K562 (cell line): ENCODE measurements at regions of chr11 and their contacts with region 1.

Region 1: GRCh38 chr11:119381181-119381988 is at the start of gene USP2:
- DNase-seq: peak; percentile 95 to 97 (median 96)
- ATAC-seq: peak; percentile 88
- H3K4me3 ChIP-seq: peak within 1 kb of the TSS; percentile 61
- H3K27ac ChIP-seq: peak within 1 kb of the TSS; percentile 67
- H3K4me1 ChIP-seq: peaks cover 43 to 47% of the 10 kb centered on the region in 2 experiments
- H3K27me3 ChIP-seq: no peaks in the 10 kb centered on the region
- CTCF ChIP-seq: peak; percentile 93 to 96 (median 94)
- EP300 ChIP-seq: peak; percentile 24; the same call in 1 of the 2 replicates
- POLR2A ChIP-seq: 0 out of 2 replicates have a peak, but pooled peaks have one; percentile 40
- RAD21 ChIP-seq: peak; percentile 87 to 89
- polyA plus RNA-seq, gene USP2: 3.4 to 5.8 TPM

Region 2: GRCh38 chr11:119368121-119369034 is 13.0 kb before region 1 on chr11:
- CTCF ChIA-PET with region 1: no interaction called
- POLR2A ChIA-PET with region 1: interaction called, 34 read pairs
- in situ Hi-C with region 1: no loop called
- intact Hi-C with region 1: no loop called
- DNase-seq: peak; percentile 59 to 85 (median 68)
- ATAC-seq: peak; percentile 63
- H3K4me3 ChIP-seq: no peak overlapping the region
- H3K27ac ChIP-seq: peak overlapping the region; percentile 59; the same call in 2 of the 3 replicates
- H3K4me1 ChIP-seq: peaks cover 54 to 61% of the 10 kb centered on the region in 2 experiments
- H3K27me3 ChIP-seq: no peaks in the 10 kb centered on the region
- CTCF ChIP-seq: no peak
- EP300 ChIP-seq: peak; percentile 47; the same call in 1 of the 2 replicates
- POLR2A ChIP-seq: no peak
- RAD21 ChIP-seq: no peak

Region 3: GRCh38 chr11:119441898-119442243 is 60.5 kb after region 1 on chr11:
- CTCF ChIA-PET with region 1: no interaction called
- POLR2A ChIA-PET with region 1: no interaction called
- in situ Hi-C with region 1: no loop called
- intact Hi-C with region 1: loop called (anchors 2 kb)
- DNase-seq: peak; percentile 36 to 70 (median 42)
- ATAC-seq: peak; percentile 86
- H3K4me3 ChIP-seq: no peak overlapping the region
- H3K27ac ChIP-seq: peak overlapping the region; percentile 69
- H3K4me1 ChIP-seq: peaks cover 8 to 20% of the 10 kb centered on the region in 2 experiments; a peak in 4 of 5 replicates
- H3K27me3 ChIP-seq: no peaks in the 10 kb centered on the region
- CTCF ChIP-seq: no peak
- EP300 ChIP-seq: no peak
- POLR2A ChIP-seq: peak; percentile 54; the same call in 1 of the 2 replicates
- RAD21 ChIP-seq: no peak